AG04449 (cell line): ENCODE measurements at regions of chr11 and their contacts with region 1.

Region 1: DNA sequence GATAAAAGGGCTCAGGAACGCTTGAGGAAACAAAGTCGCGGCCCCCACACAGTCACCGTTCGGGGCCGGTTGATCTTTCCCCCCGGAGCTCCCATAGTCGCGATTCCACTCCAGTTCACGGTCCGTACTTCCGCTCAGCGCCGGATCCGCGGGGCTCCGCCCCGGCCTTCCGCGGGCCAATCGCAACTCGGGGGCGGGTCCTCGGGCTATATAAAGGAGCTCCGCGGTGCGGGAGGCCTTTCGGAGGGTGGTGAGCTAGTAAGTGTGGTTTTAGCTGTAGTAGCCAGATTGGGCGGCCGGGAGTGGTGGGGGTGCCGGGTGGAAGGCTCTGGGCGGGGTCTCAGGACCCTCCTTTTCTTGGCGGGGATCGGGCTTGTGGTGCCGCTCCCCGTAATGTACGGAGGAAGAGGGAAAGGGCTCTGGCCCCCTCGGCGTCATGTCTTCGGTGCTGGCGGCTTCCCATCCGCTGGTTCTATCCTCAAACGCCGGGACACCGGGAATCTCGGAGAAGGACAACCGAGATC is at the starts of genes C11orf98 and CSKMT:
- DNase-seq: no peak
- H3K4me3 ChIP-seq: peak within 1 kb of the TSS; percentile 92
- CTCF ChIP-seq: no peak

Region 2: DNA sequence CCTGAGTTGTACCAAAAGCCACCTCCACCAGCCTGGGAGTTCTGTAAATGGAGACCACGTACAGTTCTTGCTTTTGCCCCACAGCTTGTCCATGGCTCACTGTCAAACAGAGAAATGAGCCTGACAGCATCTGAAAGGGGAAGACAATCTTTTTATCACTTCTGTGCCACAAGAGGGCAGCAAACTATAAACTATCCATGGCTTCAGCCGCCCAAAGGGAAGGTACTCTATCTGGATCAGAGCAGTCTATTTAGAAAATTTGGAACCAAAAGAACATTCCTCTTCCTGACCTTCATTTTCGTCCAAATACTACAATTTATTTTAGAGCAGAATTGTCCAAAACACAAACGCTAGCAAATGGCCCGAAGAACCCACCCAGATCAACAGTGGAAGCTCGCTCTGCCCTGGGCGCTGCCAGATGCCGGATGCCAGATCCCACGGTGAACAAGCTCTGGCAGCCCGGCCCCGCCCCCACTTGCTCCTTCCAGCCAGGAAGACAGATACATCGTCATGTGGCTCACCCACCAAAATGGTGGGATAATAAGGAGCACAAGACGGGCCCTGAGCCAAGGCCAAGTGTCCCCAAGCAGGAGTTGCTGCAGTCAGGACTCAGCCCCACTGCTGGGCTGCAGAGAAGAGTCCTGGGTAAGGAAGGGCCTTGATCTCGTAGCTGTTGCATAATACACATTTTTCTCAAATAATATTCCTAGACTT is 270.2 kb before region 1 on chr11:
- CTCF ChIA-PET with region 1: interaction called, 10 read pairs
- POLR2A ChIA-PET with region 1: interaction called, 10 read pairs
- DNase-seq: peak; percentile 31
- H3K4me3 ChIP-seq: peak overlapping the region; percentile 29
- CTCF ChIP-seq: peak; percentile 49

Region 3: GRCh38 chr11:62601394-62602140 is 63.6 kb before region 1 on chr11 and contains the start of gene MTA2:
- CTCF ChIA-PET with region 1: no interaction called
- POLR2A ChIA-PET with region 1: interaction called, 10 read pairs
- DNase-seq: peak; percentile 89
- H3K4me3 ChIP-seq: peak within 1 kb of the TSS; percentile 82
- CTCF ChIP-seq: no peak

Region 4: DNA sequence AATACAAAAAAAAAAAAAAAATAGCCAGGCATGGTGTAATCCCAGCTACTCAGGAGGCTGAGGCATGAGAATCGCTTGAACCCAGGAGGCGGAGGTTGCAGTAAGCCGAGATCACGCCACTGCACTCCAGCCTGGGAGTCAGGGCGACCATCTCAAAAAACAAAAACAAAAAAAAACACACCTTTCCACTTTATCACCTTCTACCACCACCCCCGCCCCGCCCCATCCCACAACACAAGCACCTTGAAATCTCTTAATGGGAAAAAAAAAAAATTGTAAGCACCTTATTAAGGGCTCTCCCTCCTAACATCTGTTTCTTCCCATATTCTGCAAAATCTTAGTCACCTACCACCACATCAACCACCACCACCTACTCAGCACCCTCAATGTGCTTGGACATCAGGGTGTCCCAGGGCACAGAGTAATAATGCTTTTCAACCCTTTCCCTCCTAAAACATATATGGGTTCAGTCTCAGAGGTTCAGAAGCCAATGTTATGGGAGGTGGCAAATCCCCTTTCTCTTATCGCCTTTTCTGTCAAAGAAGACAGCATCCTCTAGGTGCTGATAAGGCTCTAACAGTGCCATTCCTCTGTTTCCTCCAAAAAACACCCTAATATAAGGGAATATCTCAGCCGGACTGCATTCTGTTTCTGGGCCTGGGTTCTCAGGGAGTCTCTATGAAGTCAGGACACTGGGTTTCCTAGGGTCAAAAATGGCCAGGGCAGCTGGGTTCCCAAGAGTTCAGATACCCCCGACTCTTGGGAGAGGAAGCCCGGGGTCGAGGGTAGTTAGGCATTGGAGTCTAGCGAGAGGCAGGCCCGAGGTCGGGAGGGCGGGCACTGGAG is 12.8 kb before region 1 on chr11:
- CTCF ChIA-PET with region 1: interaction called, 6 read pairs
- POLR2A ChIA-PET with region 1: interaction called, 58 read pairs
- DNase-seq: no peak
- H3K4me3 ChIP-seq: peak overlapping the region; percentile 83
- CTCF ChIP-seq: no peak

Region 5: GRCh38 chr11:62694455-62695167 is 29.5 kb after region 1 on chr11:
- CTCF ChIA-PET with region 1: interaction called, 26 read pairs
- POLR2A ChIA-PET with region 1: interaction called, 43 read pairs
- DNase-seq: no peak
- H3K4me3 ChIP-seq: no peak overlapping the region
- CTCF ChIP-seq: peak; percentile 84

Region 6: DNA sequence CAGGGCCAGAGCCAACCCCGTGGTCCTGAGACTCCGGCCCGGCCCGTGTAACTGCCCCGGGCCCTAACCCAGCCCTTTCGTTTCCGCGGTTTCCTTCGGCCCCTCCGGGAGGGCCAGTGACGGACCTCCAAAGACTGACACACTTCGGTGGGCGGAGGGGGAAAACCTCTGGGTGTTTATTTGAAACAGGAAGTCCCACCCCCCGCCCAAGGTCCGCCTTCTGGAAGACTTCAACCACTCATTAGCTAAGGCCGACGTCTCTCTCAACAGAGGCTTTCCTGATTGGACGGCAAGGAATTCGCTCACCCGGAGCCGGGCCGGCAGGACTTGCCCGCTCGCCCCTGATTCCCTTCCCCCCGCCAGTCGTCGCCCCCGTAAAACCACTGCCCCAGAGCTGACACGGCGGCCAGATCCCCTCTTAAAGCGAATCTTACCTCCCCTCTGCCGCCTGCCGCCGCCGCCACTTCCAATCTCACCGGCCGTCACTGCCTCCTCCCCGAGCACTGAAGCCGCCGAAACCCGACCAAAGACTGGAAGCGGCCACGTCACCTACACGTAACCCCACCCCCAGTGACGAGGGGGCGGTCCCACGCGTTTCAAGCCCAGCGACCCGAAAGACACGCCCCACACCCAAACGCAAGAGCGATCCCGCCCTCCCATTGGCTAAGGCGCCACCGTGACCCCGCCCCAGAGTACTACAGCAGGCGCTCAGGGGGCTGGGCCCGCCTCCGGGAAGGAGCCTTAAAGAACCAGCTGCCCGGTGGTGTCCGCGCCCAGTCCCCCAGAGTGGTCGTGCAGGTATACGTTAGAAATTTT is 166.6 kb after region 1 on chr11 and contains the start of gene STX5:
- CTCF ChIA-PET with region 1: no interaction called
- POLR2A ChIA-PET with region 1: interaction called, 12 read pairs
- DNase-seq: peak; percentile 95
- H3K4me3 ChIP-seq: peak within 1 kb of the TSS; percentile 85
- CTCF ChIP-seq: no peak